ENCODE measurements at regions of chr9 and their contacts with region 1.

Region 1: GRCh38 chr9:33466565-33467495 is 6.9 kb downstream of the NOL6 start:
- DNase-seq: peak; percentile 64
- ATAC-seq: peak; percentile 84
- H3K4me3 ChIP-seq: no peak overlapping the region
- H3K4me3 Mint-ChIP-seq: no peak overlapping the region
- H3K27ac ChIP-seq: no peak overlapping the region
- H3K27ac Mint-ChIP-seq: no peak overlapping the region
- H3K4me1 ChIP-seq: peaks cover 0 to 4% of the 10 kb centered on the region in 2 donors
- H3K4me1 Mint-ChIP-seq: peaks cover 7% of the 10 kb centered on the region
- H3K27me3 ChIP-seq: no peaks in the 10 kb centered on the region
- H3K27me3 Mint-ChIP-seq: no peaks in the 10 kb centered on the region
- CTCF ChIP-seq: peak; percentile 95

Region 2: DNA sequence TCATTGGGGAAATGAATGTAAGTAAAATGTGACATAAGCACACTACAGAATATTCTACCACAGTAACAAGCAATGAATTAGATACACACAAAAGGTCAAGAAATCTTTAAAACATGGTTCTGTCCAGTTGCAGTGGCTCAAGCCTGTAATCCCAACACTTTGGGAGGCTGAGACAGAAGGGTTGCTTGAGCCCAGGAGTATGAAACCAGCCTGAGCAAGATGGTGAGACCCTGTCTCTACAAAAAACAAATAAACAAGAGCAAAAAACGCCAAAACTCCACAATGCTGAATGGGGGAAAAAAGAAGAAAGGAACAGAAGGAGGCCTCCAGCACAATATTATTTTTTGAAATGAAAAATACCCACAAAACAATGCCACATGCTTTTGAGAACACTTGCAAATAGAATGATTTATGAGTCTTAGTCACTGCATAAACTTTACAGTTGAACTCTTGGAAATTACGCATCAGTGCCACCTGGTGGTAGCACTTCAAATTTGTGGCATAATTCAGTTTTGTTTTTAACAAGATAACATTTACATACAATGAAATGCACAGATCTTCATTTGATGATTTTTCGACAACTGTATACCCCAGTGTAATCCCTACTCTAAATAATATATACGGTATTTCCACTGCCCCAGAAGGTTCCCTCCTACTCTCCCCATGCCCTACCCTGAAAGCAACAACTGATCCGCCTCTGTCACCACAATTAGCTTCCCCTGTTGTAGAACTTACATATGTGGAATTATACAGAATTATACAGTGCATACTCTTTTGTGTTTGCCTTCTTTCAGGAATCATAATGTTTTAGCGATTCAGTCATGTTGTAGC is 241.3 kb before region 1 on chr9:
- CTCF ChIA-PET with region 1: no interaction called
- POLR2A ChIA-PET with region 1: no interaction called
- intact Hi-C with region 1: no loop called
- DNase-seq: peak; percentile 82
- ATAC-seq: peak; percentile 44
- H3K4me3 ChIP-seq: no peak overlapping the region
- H3K4me3 Mint-ChIP-seq: no peak overlapping the region
- H3K27ac ChIP-seq: no peak overlapping the region
- H3K27ac Mint-ChIP-seq: no peak overlapping the region
- H3K4me1 ChIP-seq: peaks cover 35 to 46% of the 10 kb centered on the region in 2 donors
- H3K4me1 Mint-ChIP-seq: peaks cover 49% of the 10 kb centered on the region
- H3K27me3 ChIP-seq: no peaks in the 10 kb centered on the region
- H3K27me3 Mint-ChIP-seq: no peaks in the 10 kb centered on the region
- CTCF ChIP-seq: peak; percentile 86

Region 3: GRCh38 chr9:33374634-33375213 is 92.1 kb before region 1 on chr9:
- CTCF ChIA-PET with region 1: interaction called, 17 read pairs
- POLR2A ChIA-PET with region 1: no interaction called
- intact Hi-C with region 1: no loop called
- DNase-seq: peak; percentile 66
- ATAC-seq: peak; percentile 88
- H3K4me3 ChIP-seq: no peak overlapping the region
- H3K4me3 Mint-ChIP-seq: no peak overlapping the region
- H3K27ac ChIP-seq: no peak overlapping the region
- H3K27ac Mint-ChIP-seq: no peak overlapping the region
- H3K4me1 ChIP-seq: peaks cover 0 to 7% of the 10 kb centered on the region in 2 donors
- H3K4me1 Mint-ChIP-seq: peaks cover 5% of the 10 kb centered on the region
- H3K27me3 ChIP-seq: no peaks in the 10 kb centered on the region
- H3K27me3 Mint-ChIP-seq: no peaks in the 10 kb centered on the region
- CTCF ChIP-seq: peak; percentile 87

Region 4: DNA sequence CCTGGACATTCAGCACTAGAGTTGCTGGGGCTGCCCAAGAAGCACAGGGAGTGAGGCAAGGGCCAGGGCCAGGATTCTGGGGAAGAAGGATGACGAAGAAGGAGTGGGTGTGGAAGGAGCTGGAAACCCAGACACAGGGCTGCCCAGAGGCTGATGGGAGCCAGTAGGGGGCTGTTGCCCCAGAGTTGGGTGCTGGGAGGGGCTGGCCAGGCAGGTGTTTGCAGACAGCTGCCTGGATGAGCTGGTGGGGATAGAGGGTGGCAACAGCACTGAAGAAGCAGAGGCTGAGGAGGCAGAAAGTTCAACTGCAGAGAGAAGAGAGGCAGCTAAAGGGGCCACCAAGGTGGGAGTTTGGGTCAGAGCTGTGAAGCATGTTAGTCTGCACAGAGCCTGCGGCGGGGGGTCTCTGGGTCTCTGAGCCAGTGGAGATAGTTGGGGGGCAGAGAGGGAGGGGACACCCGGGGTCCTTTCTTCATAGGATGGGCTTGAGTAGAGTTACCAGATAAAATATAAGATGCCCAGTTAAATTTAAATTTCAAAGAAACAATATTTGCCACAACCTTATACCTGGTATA is 62.0 kb before region 1 on chr9:
- CTCF ChIA-PET with region 1: interaction called, 24 read pairs
- POLR2A ChIA-PET with region 1: no interaction called
- intact Hi-C with region 1: loop called (anchors 2 kb)
- DNase-seq: no peak
- ATAC-seq: no peak
- H3K4me3 ChIP-seq: no peak overlapping the region
- H3K4me3 Mint-ChIP-seq: no peak overlapping the region
- H3K27ac ChIP-seq: no peak overlapping the region
- H3K27ac Mint-ChIP-seq: no peak overlapping the region
- H3K4me1 ChIP-seq: no peaks in the 10 kb centered on the region
- H3K4me1 Mint-ChIP-seq: no peaks in the 10 kb centered on the region
- H3K27me3 ChIP-seq: no peaks in the 10 kb centered on the region
- H3K27me3 Mint-ChIP-seq: peaks cover 6% of the 10 kb centered on the region
- CTCF ChIP-seq: no peak

Region 5: DNA sequence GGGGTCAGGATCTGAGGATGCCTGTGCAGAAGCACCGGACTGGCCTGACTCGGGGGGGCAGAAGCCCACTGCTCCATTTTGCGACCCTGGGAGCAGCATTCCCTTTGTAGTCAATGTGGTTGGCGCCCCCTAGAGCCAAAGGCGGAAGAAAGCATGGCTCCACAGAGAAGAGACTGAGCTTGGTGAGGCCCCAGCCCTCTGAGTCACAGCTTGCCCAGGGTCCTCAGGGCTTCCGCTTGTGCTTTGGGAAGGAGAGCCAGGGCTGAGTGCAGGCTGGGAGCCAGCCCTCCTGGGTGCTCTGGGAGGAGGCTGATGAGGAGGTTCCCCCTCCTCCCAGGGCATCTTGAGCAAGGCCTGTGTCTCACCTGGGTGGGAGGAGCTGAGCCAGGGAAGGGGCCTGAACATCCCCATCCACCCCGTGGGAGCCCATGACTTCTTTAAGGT is 14.0 kb before region 1 on chr9:
- CTCF ChIA-PET with region 1: interaction called, 15 read pairs
- POLR2A ChIA-PET with region 1: no interaction called
- intact Hi-C with region 1: no loop called
- DNase-seq: no peak
- ATAC-seq: peak; percentile 24
- H3K4me3 ChIP-seq: no peak overlapping the region
- H3K4me3 Mint-ChIP-seq: no peak overlapping the region
- H3K27ac ChIP-seq: no peak overlapping the region
- H3K27ac Mint-ChIP-seq: no peak overlapping the region
- H3K4me1 ChIP-seq: peaks cover 4 to 16% of the 10 kb centered on the region in 2 donors
- H3K4me1 Mint-ChIP-seq: peaks cover 3% of the 10 kb centered on the region
- H3K27me3 ChIP-seq: peaks cover 0 to 5% (median 1%) of the 10 kb centered on the region in 4 experiments
- H3K27me3 Mint-ChIP-seq: peaks cover under 1% of the 10 kb centered on the region
- CTCF ChIP-seq: no peak

Region 6: DNA sequence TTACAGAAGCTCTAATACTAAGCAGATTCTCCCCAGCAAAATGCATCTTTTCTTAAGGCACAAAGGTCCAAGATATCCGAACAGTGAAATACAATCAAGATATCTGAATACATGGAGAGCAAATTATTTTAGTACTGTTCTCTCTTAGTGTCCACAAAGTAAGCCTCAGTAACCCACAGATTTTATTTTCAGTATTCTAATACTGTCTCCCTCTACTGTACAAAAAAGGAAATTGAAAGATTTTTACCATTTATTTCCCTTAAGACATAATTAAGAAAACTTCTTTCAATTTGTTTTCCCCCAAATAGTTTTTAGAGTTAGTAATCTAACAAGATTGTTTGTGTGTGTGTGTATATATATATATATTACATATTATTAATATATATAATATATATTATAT is 31.6 kb after region 1 on chr9:
- CTCF ChIA-PET with region 1: no interaction called
- POLR2A ChIA-PET with region 1: no interaction called
- intact Hi-C with region 1: no loop called
- DNase-seq: no peak
- ATAC-seq: no peak
- H3K4me3 ChIP-seq: no peak overlapping the region
- H3K4me3 Mint-ChIP-seq: no peak overlapping the region
- H3K27ac ChIP-seq: no peak overlapping the region
- H3K27ac Mint-ChIP-seq: no peak overlapping the region
- H3K4me1 ChIP-seq: no peaks in the 10 kb centered on the region
- H3K4me1 Mint-ChIP-seq: no peaks in the 10 kb centered on the region
- H3K27me3 ChIP-seq: no peaks in the 10 kb centered on the region
- H3K27me3 Mint-ChIP-seq: peaks cover 10% of the 10 kb centered on the region
- CTCF ChIP-seq: peak; percentile 40

Measured in B cell (primary cell).